Dendritic cell treated with granulocyte-macrophage colony-stimulating factor and Interleukin-4, amounts not matched to agents 40 ng/mL and 50 ng/mL, for 4 days (primary cell): ENCODE measurements at regions of chr1 and their contacts with region 1.

Region 1: GRCh38 chr1:223712194-223712849 is at the start of gene CAPN2:
- H3K4me3 Mint-ChIP-seq: peak within 1 kb of the TSS; percentile 97
- H3K27ac Mint-ChIP-seq: peak within 1 kb of the TSS; percentile 94
- H3K4me1 Mint-ChIP-seq: peaks cover 63% of the 10 kb centered on the region
- H3K27me3 Mint-ChIP-seq: peaks cover 8% of the 10 kb centered on the region

Region 2: DNA sequence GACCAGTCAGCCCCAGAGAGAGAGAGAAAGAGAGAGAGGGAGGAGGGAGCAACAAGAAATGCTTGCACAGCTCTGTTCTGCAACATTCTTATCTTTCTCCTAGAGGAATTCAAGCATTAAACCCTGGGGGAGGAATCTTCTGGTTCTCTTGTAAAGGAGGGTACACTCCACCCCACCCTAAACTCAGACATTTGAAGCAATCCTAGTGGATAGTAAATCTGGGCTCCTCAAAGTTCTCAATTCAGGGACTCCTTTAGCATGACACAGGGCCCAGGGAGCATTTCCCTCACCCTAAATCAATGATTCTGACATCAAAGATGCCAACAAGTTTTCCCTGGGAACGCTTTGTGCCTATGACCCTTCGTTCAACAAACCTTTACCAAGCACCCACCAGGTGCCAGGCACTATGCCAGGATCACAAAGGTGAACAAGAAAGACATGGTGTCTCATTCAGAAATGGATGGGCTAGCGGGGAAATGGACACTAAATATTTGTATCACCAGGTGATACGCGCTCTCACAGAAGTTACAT is 11.9 kb before region 1 on chr1:
- intact Hi-C with region 1: no loop called
- H3K4me3 Mint-ChIP-seq: no peak overlapping the region
- H3K27ac Mint-ChIP-seq: peak overlapping the region; percentile 28
- H3K4me1 Mint-ChIP-seq: peaks cover 43% of the 10 kb centered on the region
- H3K27me3 Mint-ChIP-seq: peaks cover 2% of the 10 kb centered on the region

Region 3: DNA sequence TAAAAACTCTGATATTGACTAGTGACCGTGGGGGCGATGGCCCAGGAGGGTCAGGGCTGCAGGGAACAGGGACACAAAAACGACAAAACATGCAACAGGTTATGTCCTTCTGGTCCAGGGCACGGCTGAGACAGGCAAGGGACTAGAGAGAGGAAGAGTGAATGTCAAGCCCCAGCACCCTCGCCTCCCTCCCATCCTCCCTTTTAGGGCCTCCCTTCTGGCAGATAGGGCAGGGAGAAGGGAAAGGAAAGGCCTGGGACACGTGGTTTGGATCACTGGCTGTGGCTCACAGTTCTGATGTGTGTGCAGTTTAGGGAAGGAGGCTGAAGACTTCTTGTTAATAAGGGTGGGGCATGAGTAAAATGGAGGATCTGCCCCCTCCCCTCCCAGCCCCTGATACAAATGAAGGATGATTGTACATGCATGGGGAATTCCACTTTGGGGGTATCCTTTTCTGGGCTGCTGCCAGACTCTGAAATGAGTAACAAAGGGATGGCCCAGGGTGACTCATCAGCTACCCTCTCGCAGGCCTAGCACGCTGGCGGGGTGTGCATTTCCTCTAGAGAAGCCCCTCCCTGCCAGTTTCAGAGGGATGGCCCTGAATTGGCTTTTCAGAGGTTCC is 14.2 kb after region 1 on chr1:
- intact Hi-C with region 1: loop called (anchors 2 kb)
- H3K4me3 Mint-ChIP-seq: peak overlapping the region; percentile 76
- H3K27ac Mint-ChIP-seq: peak overlapping the region; percentile 91
- H3K4me1 Mint-ChIP-seq: peaks cover 91% of the 10 kb centered on the region
- H3K27me3 Mint-ChIP-seq: no peaks in the 10 kb centered on the region

Region 4: DNA sequence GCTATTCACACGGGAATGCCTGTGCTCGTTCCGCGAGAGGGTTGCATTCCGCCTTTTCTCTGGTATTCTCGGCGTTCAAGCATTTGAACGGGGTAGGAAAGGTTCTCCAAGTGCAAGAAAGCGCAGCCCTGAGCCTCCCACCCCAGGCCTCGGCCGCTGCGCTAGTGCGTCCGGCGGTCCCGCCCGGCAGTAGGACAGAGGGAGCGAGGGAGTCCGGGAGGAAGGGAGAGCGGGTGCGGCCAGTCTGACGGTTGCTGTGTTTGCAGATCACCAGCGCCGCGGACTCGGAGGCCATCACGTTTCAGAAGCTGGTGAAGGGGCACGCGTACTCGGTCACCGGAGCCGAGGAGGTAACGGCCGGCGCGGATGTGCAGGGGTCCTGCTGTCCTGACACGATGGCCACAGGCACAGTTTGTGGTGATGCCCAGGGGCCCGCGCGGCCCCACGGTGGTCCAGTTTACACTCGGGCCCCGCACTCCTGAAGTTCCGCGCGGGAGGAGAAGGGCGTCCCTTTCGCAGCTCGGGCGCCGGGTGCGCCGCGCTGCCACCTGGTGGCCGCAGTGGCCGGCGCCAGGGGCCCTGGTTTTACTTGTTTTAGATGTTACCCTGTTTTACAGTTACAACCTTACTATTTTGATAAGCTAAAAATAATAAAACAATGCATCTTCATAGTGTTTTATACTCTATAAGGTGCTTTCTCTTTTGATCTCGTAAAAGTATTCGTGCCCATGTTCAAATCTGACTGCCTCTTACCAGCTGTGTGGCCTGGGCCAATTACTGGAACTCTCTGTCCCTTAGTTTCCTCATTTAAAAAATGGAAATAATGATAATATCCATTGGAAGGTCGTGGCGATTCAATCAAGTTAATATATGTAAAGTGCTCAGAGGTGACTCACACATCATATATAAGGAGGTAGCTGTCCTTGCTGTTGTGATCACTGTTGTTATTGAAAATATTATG is 36.7 kb after region 1 on chr1:
- intact Hi-C with region 1: loop called (anchors 1 kb)
- H3K4me3 Mint-ChIP-seq: peak overlapping the region; percentile 70
- H3K27ac Mint-ChIP-seq: peak overlapping the region; percentile 66
- H3K4me1 Mint-ChIP-seq: peaks cover 22% of the 10 kb centered on the region
- H3K27me3 Mint-ChIP-seq: no peaks in the 10 kb centered on the region

Region 5: GRCh38 chr1:223845810-223846682 is 133.7 kb after region 1 on chr1 and contains the start of gene TP53BP2:
- intact Hi-C with region 1: loop called (anchors 10 kb)
- H3K4me3 Mint-ChIP-seq: peak within 1 kb of the TSS; percentile 89
- H3K27ac Mint-ChIP-seq: peak within 1 kb of the TSS; percentile 100
- H3K4me1 Mint-ChIP-seq: peaks cover 34% of the 10 kb centered on the region
- H3K27me3 Mint-ChIP-seq: no peaks in the 10 kb centered on the region

Region 6: GRCh38 chr1:224329842-224330753 is 617.8 kb after region 1 on chr1 and contains the start of gene NVL:
- intact Hi-C with region 1: loop called (anchors 5 kb)
- H3K4me3 Mint-ChIP-seq: peak within 1 kb of the TSS; percentile 91
- H3K27ac Mint-ChIP-seq: peak within 1 kb of the TSS; percentile 97
- H3K4me1 Mint-ChIP-seq: peaks cover 38% of the 10 kb centered on the region
- H3K27me3 Mint-ChIP-seq: no peaks in the 10 kb centered on the region